ENCODE measurements at regions of chr5 and their contacts with region 1.

Region 1: DNA sequence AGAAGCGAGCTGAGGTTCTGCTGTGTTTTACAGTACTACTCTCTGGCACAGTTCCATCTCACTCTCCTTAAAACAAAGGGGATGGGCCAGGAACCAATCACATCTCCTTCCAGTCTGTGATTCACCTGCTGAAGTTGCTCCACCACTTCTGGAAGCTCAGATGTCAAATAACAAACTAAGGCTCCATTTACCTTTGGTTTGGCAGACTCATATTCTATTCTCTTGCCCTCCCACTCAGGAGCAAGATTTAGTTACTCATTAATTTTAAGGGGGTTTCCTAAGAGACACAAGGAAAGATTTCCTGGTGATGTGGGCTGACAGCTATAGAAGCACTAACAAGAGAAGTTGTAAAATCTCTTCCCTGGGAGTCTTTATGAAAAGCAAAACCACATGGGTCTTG is 37.8 kb upstream of the KIF2A start:
- DNase-seq: no peak
- H3K4me3 Mint-ChIP-seq: no peak overlapping the region
- H3K27ac Mint-ChIP-seq: no peak overlapping the region
- H3K4me1 Mint-ChIP-seq: peaks cover 21% of the 10 kb centered on the region
- H3K27me3 Mint-ChIP-seq: no peaks in the 10 kb centered on the region

Region 2: DNA sequence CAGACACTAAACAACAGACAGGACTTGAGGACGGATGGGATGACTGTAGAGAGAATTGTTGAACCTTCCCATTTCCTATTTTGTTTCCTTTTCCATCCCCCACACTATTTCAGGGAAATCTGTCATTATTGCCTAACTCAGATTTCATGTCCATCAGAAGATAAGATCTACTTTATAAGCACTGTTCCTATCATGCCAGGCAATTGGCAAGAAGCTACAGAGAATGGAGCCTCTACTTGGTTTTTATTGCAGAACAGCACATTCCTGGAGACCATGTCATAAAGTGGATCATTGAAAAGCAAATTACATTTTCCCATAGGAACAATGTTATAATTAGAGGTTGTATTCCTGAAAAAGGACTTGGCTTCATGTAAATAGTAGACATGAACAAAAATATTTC is 136.0 kb before region 1 on chr5:
- CTCF ChIA-PET with region 1: no interaction called
- POLR2A ChIA-PET with region 1: no interaction called
- DNase-seq: no peak
- H3K4me3 Mint-ChIP-seq: no peak overlapping the region
- H3K27ac Mint-ChIP-seq: no peak overlapping the region
- H3K4me1 Mint-ChIP-seq: no peaks in the 10 kb centered on the region
- H3K27me3 Mint-ChIP-seq: no peaks in the 10 kb centered on the region

Region 3: DNA sequence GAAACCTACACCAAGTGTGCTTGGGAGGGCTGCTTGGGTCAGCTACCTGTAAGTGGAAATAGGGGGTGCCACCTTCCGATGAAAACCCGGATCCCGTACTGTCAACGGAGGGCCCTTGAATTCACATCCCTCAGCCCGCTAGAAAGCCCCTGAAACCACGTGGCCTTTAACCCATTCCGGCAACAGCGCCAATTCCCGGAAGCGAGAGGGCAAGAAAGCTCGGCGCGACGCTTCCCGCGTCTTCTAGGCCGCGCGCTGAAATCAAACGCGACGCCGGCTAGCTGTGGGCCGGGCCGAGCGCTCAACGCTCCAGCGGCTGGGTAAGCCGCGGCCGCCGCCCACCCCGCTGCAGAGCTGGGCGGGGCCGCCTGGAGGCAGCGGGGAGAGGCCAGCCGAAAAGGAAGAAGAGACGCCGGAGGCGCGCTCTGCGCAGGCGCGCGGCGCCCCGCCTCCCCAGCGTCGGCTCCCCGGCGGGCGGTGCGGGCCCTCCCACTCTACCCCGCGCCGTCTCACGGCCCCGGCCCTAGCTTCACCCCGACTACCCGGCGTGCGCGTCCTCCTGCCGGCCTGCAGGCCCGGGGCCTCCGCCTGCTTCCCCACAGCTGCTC is 37.6 kb after region 1 on chr5 and contains the start of gene KIF2A:
- CTCF ChIA-PET with region 1: interaction called, 3 read pairs
- POLR2A ChIA-PET with region 1: interaction called, 14 read pairs
- DNase-seq: peak; percentile 95
- H3K4me3 Mint-ChIP-seq: peak within 1 kb of the TSS; percentile 95
- H3K27ac Mint-ChIP-seq: peak within 1 kb of the TSS; percentile 97
- H3K4me1 Mint-ChIP-seq: peaks cover 62% of the 10 kb centered on the region
- H3K27me3 Mint-ChIP-seq: no peaks in the 10 kb centered on the region
- total RNA-seq, gene KIF2A: 151 to 204 TPM

Region 4: GRCh38 chr5:62316176-62316502 is 47.9 kb after region 1 on chr5:
- CTCF ChIA-PET with region 1: no interaction called
- POLR2A ChIA-PET with region 1: no interaction called
- DNase-seq: no peak
- H3K4me3 Mint-ChIP-seq: no peak overlapping the region
- H3K27ac Mint-ChIP-seq: no peak overlapping the region
- H3K4me1 Mint-ChIP-seq: peaks cover 67% of the 10 kb centered on the region
- H3K27me3 Mint-ChIP-seq: no peaks in the 10 kb centered on the region